ENCODE measurements at regions of chr7 and their contacts with region 1.

Region 1: DNA sequence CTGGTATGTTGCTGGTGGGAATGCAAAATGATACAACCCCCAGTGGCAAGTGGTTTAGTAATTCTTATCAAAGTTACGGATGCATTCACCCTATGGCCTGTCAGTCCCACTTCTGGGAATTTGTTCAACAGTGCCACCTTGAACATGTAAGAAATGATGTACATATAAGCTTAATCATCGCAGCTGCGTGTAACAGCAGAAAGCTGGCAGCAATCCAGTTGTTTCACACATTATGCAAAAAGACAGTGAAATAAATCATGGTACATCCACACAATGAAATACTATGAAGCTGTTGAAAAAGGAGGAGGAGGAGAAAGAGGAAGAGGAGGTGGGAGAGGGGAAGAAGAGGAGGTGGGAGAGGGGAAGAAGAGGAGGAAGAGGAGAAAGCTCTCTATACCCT is 76.2 kb upstream of the MYL10 start:
- DNase-seq: no peak
- H3K4me3 ChIP-seq: no peak overlapping the region
- H3K27ac ChIP-seq: no peak overlapping the region
- H3K4me1 ChIP-seq: no peaks in the 10 kb centered on the region; the same call in 1 of the 2 replicates
- H3K27me3 ChIP-seq: no peaks in the 10 kb centered on the region
- CTCF ChIP-seq: no peak

Region 2: DNA sequence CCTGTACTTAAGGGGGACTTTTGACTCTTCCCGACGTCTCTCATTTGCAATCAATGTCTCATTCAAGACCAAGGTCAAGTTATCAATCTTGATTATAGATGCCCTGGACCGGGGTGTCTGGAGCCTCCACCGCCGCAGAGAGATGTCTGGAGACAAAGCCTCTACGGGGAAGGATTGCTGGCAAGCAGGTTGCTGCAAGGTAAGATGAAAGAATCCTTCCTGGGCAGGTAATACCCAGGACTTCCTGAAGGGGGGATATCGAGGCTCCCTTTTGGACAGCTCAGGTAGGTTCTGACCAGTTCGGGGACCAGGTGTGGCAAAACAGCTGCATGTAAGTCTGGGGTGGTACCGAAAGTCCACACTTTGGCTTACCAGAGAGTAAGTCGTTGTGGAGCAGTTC is 99.6 kb after region 1 on chr7:
- CTCF ChIA-PET with region 1: interaction called, 9 read pairs
- POLR2A ChIA-PET with region 1: interaction called, 26 read pairs
- intact Hi-C with region 1: no loop called
- DNase-seq: peak in 1 of 2 experiments; percentile 35
- H3K4me3 ChIP-seq: no peak overlapping the region
- H3K27ac ChIP-seq: no peak overlapping the region
- H3K4me1 ChIP-seq: peaks cover 7% of the 10 kb centered on the region; the same call in 1 of the 2 replicates
- H3K27me3 ChIP-seq: no peaks in the 10 kb centered on the region
- CTCF ChIP-seq: peak; percentile 70

Region 3: DNA sequence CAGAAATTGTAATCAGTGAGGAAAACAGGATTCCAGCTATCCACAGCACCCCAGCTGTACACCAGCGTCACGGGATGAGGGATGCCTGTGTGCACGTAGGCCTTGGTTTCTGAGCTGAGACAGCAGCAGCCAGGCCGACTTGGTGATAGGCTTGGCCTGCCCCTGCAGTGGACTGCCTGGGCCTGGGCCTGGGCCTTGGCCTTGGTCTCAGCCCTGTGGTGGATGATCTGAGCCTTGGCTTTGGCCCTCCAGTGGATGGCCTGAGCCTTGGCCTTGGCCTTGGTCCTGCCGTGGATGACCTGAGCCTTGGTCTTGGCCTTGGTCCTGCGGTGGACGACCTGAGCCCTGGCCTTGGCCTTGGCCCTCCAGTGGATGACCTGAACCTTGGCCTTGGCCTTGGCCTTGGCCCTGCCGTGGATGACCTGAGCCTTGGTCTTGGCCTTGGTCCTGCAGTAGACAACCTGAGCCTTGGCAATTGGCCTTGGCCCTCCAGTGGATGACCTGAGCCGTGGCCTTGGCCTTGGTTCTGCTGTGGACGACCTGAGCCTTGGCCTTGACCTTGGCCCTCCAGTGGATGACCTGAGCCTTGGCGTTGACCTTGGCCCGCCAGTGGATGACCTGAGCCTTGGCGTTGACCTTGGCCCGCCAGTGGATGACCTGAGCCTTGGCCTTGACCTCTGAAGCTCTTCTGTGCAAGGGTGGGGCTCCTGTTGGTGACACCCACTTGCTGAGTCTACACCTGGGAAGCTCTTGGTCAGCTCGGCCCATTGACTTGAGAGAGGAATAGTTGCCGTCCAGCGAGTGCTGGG is 205.9 kb after region 1 on chr7:
- CTCF ChIA-PET with region 1: no interaction called
- POLR2A ChIA-PET with region 1: interaction called, 10 read pairs
- intact Hi-C with region 1: no loop called
- DNase-seq: no peak
- H3K4me3 ChIP-seq: no peak overlapping the region
- H3K27ac ChIP-seq: no peak overlapping the region
- H3K4me1 ChIP-seq: no peaks in the 10 kb centered on the region
- H3K27me3 ChIP-seq: no peaks in the 10 kb centered on the region
- CTCF ChIP-seq: no peak

Measured in PC-9 (cell line).